HCT116 (cell line): ENCODE measurements at regions of chr12 and their contacts with region 1.

Region 1: GRCh38 chr12:11055306-11055705 is 6.8 kb downstream of the TAS2R46 start:
- DNase-seq: no peak
- ATAC-seq: no peak
- H3K4me3 ChIP-seq: no peak overlapping the region
- H3K27ac ChIP-seq: no peak overlapping the region
- H3K4me1 ChIP-seq: no peaks in the 10 kb centered on the region
- H3K27me3 ChIP-seq: no peaks in the 10 kb centered on the region
- CTCF ChIP-seq: no peak
- POLR2A ChIP-seq: no peak
- RAD21 ChIP-seq: no peak

Region 2: DNA sequence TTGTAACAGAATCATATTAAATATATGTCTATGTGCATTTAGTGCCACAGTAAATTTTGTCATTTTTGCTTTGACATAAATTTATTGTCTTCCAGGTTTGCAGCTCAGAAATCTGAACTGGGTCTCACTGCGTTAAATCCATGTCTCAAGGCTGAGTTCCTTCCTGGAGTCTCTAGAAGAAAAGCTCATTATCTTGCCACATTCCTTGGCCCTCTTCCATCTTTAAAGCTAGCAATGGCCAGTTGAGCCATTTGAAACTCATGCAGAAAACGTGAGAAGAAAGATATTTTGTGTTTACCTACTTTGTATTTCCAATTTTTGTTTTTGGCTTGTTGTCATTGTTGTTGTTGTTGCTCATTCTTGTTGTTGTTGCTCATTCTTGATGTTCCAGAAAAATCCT is 181.9 kb before region 1 on chr12:
- CTCF ChIA-PET with region 1: no interaction called
- POLR2A ChIA-PET with region 1: no interaction called
- RAD21 ChIA-PET with region 1: no interaction called
- intact Hi-C with region 1: no loop called
- DNase-seq: no peak
- ATAC-seq: no peak
- H3K4me3 ChIP-seq: no peak overlapping the region
- H3K27ac ChIP-seq: no peak overlapping the region
- H3K4me1 ChIP-seq: no peaks in the 10 kb centered on the region
- H3K27me3 ChIP-seq: no peaks in the 10 kb centered on the region
- CTCF ChIP-seq: no peak
- POLR2A ChIP-seq: no peak
- RAD21 ChIP-seq: no peak

Region 3: GRCh38 chr12:11081987-11082386 is 26.7 kb after region 1 on chr12:
- CTCF ChIA-PET with region 1: no interaction called
- POLR2A ChIA-PET with region 1: no interaction called
- RAD21 ChIA-PET with region 1: no interaction called
- intact Hi-C with region 1: loop called (anchors 2 kb)
- DNase-seq: no peak
- ATAC-seq: no peak
- H3K4me3 ChIP-seq: no peak overlapping the region
- H3K27ac ChIP-seq: no peak overlapping the region
- H3K4me1 ChIP-seq: no peaks in the 10 kb centered on the region
- H3K27me3 ChIP-seq: no peaks in the 10 kb centered on the region
- CTCF ChIP-seq: no peak
- POLR2A ChIP-seq: no peak
- RAD21 ChIP-seq: no peak